ENCODE measurements at regions of chr2 and their contacts with region 1.

Region 1: DNA sequence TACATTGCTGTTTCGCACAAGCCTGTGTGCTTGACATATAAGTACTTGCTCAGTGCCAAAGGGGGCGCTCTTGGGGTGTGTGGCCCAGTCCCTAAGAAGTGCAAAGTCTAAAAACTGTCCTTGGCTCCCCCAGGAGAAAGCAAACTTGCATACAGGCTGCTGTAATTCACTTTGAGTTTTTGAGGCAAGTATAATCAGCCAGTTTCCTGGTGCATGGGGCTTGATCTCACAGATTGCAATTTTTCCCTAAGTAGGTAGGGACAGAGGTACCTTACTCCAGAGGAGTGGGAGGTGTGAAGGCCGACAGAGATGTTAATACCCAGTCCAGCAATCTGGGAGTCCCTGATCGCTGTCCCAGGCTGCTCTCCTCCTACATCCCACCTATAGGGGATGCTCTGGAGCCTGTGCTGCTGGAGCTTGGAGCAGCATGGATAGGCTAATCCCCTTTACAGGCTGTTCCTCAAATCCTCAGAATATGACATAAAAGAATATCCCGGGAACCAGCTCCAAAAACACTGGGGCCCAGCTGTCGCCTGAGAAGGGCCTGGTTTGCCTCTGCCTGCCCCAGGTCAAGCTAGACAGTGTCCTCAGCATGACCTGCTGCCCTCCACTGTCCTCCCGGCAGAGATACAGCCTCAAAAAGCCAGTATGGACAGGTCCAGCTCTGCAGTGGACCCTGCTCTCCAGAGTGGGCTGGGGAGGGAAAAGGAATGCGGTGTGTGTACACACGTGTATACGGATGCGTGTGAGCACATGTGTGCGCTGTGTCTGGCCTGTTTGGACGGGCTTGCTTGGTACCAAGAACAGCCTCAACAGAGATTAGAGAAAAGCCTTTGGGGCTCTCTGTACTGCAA is 136.5 kb upstream of the HAAO start:
- DNase-seq: peak in 1 of 2 experiments; percentile 70
- H3K4me3 ChIP-seq: no peak overlapping the region; a peak in 1 of 8 replicates
- H3K27ac ChIP-seq: peak overlapping the region; percentile 56
- H3K4me1 ChIP-seq: peaks cover 29 to 49% (median 41%) of the 10 kb centered on the region in 4 experiments
- H3K27me3 ChIP-seq: no peaks in the 10 kb centered on the region
- CTCF ChIP-seq: peak in 2 of 3 experiments; percentile 69 to 77; a peak in 3 of 4 replicates
- EP300 ChIP-seq: no peak
- POLR2A ChIP-seq: no peak
- RAD21 ChIP-seq: peak; percentile 33 to 48; a peak in 3 of 4 replicates

Region 2: DNA sequence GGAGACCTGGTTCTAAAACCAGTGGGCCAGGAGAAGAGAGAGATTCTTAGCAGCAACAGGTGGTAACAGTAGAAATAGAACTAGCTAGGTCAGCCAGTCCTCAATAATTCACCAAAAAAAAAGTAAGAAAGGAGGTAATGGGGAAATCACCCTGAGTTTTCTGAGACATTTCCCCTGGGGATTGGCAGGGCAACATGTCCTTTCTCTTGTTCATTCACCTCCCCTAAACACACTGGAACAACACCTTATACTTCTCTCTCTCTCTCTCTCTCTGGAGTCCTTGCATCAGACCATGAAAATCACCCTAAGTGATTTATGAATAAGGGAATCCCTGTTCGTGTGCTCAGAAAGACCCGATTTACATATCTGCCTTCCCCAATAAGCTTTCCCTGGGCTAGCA is 632.7 kb before region 1 on chr2:
- CTCF ChIA-PET with region 1: no interaction called
- POLR2A ChIA-PET with region 1: no interaction called
- DNase-seq: no peak
- H3K4me3 ChIP-seq: no peak overlapping the region
- H3K27ac ChIP-seq: no peak overlapping the region
- H3K4me1 ChIP-seq: no peaks in the 10 kb centered on the region
- H3K27me3 ChIP-seq: peaks cover 0 to 1% (median 0%) of the 10 kb centered on the region in 4 experiments; a peak in 1 of 7 replicates
- CTCF ChIP-seq: no peak
- EP300 ChIP-seq: no peak
- POLR2A ChIP-seq: no peak
- RAD21 ChIP-seq: no peak

Region 3: DNA sequence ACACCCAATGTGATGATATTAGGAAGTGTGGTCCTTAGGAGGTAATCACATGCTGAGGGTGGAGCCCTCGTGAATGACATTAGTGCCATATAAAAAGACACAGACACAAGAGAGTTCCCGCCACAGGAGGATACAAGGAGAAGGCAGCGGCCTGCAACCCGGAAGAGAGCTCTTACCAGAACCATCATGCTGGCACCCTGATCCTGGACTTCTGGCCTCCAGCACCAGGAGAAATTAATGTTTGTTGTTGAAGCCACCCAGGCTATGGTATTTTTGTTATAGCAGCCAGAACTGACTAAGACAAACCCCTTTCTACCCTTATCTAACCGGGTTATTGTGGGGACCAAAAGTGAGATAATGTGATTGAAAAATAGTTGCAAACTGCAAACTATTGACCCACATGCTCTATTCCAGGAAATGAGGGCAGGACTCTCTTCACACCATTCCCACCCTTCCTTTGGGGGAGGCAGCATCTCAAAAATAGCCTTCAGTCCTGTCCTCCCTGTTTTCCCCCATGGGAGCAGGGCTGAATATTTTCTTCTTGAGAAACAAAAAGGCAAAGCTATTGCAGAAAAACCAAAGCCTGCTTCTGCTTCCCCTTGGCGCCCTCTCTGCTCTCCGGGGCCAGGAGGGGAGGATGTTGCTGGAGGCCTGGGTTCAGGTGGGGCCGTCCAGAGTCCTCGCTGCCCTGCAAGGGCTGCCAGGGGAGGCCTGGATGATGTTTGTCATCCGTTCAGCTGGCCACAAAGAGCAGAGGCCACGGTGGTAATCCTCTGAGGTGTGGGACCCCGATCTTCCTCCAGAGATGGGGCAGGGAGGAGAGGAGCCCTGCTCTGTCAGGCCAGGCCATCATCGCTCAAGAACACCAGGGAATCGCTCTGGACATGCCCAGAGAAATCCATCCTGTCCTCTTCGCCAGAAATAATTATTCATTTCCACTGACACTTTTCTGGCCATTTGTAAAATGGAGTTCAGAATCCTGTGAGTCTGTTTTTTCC is 62.7 kb before region 1 on chr2:
- CTCF ChIA-PET with region 1: interaction called, 12 read pairs
- POLR2A ChIA-PET with region 1: no interaction called
- DNase-seq: no peak
- H3K4me3 ChIP-seq: no peak overlapping the region
- H3K27ac ChIP-seq: no peak overlapping the region
- H3K4me1 ChIP-seq: no peaks in the 10 kb centered on the region
- H3K27me3 ChIP-seq: no peaks in the 10 kb centered on the region
- CTCF ChIP-seq: no peak
- EP300 ChIP-seq: no peak
- POLR2A ChIP-seq: no peak
- RAD21 ChIP-seq: no peak

Region 4: GRCh38 chr2:42878581-42878980 is 50.3 kb before region 1 on chr2:
- CTCF ChIA-PET with region 1: interaction called, 21 read pairs
- POLR2A ChIA-PET with region 1: no interaction called
- DNase-seq: no peak
- H3K4me3 ChIP-seq: no peak overlapping the region
- H3K27ac ChIP-seq: no peak overlapping the region
- H3K4me1 ChIP-seq: no peaks in the 10 kb centered on the region
- H3K27me3 ChIP-seq: no peaks in the 10 kb centered on the region
- CTCF ChIP-seq: no peak
- EP300 ChIP-seq: no peak
- POLR2A ChIP-seq: no peak
- RAD21 ChIP-seq: no peak

Region 5: DNA sequence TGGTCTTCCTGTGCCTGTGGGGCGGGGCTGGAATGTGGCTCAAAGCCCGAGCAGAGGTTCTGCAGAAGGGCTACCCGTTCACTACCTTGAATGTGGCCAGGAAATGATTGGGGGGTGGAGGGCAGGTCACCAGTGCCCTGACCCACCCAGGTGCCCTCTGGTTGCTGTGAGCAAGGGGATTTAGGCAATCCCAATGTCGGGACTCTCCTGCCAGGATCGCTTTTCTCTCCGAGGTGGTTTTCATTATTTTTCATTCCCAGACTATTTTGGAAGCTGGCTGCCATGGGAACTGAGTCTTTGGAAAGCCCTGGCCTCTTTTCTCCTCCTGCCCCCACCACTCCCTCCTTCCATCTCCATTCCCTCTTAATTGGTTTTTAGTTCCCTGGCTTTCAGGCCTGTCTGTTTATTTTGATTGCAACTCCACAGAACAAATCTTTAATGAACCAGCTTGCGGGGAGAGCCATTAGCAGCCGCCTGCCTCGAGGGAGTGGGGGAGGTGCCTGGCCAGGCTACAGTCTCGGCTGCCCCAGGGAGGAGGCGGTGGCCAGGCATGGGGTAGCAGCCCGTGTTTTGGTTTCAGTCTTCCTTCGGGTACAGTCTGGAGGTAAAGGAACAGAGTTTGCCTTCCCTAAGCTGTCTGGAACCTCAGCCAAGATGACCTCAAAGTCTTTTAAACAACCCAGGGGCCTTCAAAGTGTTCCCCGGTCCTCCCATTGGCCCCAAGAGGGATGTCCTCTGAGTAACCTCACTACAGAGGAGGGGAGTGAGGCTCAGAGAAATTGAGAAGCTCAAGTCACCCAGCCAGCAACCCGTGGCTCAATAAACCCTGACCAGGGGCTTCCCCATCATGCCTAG is 22.1 kb before region 1 on chr2:
- CTCF ChIA-PET with region 1: interaction called, 40 read pairs
- POLR2A ChIA-PET with region 1: interaction called, 4 read pairs
- DNase-seq: peak in 1 of 2 experiments; percentile 57
- H3K4me3 ChIP-seq: no peak overlapping the region
- H3K27ac ChIP-seq: no peak overlapping the region
- H3K4me1 ChIP-seq: peaks cover 0 to 13% (median 10%) of the 10 kb centered on the region in 4 experiments; a peak in 5 of 7 replicates
- H3K27me3 ChIP-seq: peaks cover 0 to 2% (median 0%) of the 10 kb centered on the region in 4 experiments; a peak in 1 of 7 replicates
- CTCF ChIP-seq: no peak
- EP300 ChIP-seq: no peak
- POLR2A ChIP-seq: no peak
- RAD21 ChIP-seq: no peak

Region 6: GRCh38 chr2:42917425-42917927 is 11.4 kb before region 1 on chr2:
- CTCF ChIA-PET with region 1: interaction called, 69 read pairs
- POLR2A ChIA-PET with region 1: no interaction called
- DNase-seq: no peak
- H3K4me3 ChIP-seq: no peak overlapping the region
- H3K27ac ChIP-seq: no peak overlapping the region
- H3K4me1 ChIP-seq: no peaks in the 10 kb centered on the region; a peak in 1 of 7 replicates
- H3K27me3 ChIP-seq: no peaks in the 10 kb centered on the region
- CTCF ChIP-seq: no peak
- EP300 ChIP-seq: no peak
- POLR2A ChIP-seq: no peak
- RAD21 ChIP-seq: no peak

Region 7: GRCh38 chr2:43059183-43059897 is 130.4 kb after region 1 on chr2:
- CTCF ChIA-PET with region 1: no interaction called
- POLR2A ChIA-PET with region 1: no interaction called
- DNase-seq: no peak
- H3K4me3 ChIP-seq: no peak overlapping the region
- H3K27ac ChIP-seq: no peak overlapping the region
- H3K4me1 ChIP-seq: peaks cover 7 to 18% (median 11%) of the 10 kb centered on the region in 4 experiments
- H3K27me3 ChIP-seq: no peaks in the 10 kb centered on the region
- CTCF ChIP-seq: no peak
- EP300 ChIP-seq: no peak
- POLR2A ChIP-seq: no peak
- RAD21 ChIP-seq: no peak